Activated T-helper 2 cell treated with anti-CD3 and anti-CD28 coated beads, Interferon-gamma antibody, Interleukin-2, Interleukin-4, amounts not matched to agents 10 μg/mL and 5 μg/mL and 100 μg/mL, durations not matched to agents 14 hours and 24 hours and 36 hours (primary cell): ENCODE measurements at regions of chr2 and their contacts with region 1.

Region 1: DNA sequence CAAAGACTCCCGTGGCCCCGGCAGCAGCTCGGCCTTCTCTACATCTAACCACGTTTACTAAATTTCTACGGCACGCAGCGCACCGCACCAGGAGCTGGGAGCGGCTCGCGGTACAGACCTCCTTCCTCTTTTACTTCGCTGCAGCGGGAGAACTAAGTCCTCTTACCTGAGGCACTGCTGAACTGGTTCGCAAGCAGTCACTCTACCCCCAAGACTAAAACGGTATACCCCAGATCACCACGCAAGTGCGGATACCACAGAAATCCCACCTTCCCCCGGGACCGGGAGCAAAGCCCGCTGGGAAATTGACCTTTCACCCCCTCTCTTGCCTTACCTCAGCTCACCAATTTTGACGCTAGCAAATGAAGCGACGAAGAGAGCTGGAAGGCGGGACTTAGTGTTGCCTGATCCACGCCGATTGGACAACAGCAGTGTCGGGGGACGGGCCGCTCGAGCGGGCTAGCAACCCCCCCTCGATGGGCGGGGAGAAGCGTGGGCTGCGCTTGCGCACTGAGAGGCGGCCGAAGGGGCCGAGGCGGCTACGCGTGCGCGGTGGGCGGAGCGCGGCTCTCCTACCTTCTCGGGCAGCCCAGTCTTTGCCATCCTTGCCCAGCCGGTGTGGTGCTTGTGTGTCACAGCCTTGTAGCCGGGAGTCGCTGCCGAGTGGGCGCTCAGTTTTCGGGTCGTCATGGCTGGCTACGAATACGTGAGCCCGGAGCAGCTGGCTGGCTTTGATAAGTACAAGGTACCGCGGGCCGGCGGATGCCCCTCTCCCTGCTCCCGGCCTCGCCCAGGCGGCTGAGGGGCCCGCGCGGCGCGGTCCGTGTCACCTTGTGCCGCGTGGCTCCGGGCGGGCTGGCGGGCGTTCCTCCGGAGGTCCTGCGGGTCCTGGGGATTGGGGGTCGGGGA is at the start of gene SELENOI:
- DNase-seq: peak; percentile 99
- H3K4me3 Mint-ChIP-seq: peak within 1 kb of the TSS; percentile 99
- H3K27ac Mint-ChIP-seq: peak within 1 kb of the TSS; percentile 99
- H3K4me1 Mint-ChIP-seq: peaks cover 25% of the 10 kb centered on the region
- H3K27me3 Mint-ChIP-seq: no peaks in the 10 kb centered on the region
- total RNA-seq, gene SELENOI: 45.5 and 51.4 TPM in 2 replicates

Region 2: DNA sequence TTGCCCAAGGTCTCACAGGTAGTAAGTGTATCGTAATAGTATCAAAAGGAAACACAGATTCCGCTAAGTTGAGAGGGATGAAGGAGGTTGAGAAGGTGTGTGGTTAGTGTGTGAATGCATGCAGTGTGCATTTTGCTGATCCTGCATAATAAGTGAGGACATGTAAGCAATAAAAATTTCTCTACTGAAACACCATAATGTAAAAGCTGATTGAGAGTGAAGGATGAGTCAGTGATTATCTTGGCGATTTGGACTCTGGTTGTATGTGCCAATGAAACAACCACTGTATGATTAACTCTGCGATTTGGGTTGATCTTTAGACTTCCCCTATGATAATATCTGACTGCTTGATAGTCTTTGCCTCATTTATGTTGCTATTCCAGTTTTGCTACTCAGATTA is 17.5 kb after region 1 on chr2:
- intact Hi-C with region 1: loop called (anchors 2 kb)
- DNase-seq: no peak
- H3K4me3 Mint-ChIP-seq: no peak overlapping the region
- H3K27ac Mint-ChIP-seq: peak overlapping the region; percentile 21
- H3K4me1 Mint-ChIP-seq: peaks cover 20% of the 10 kb centered on the region
- H3K27me3 Mint-ChIP-seq: no peaks in the 10 kb centered on the region

Region 3: DNA sequence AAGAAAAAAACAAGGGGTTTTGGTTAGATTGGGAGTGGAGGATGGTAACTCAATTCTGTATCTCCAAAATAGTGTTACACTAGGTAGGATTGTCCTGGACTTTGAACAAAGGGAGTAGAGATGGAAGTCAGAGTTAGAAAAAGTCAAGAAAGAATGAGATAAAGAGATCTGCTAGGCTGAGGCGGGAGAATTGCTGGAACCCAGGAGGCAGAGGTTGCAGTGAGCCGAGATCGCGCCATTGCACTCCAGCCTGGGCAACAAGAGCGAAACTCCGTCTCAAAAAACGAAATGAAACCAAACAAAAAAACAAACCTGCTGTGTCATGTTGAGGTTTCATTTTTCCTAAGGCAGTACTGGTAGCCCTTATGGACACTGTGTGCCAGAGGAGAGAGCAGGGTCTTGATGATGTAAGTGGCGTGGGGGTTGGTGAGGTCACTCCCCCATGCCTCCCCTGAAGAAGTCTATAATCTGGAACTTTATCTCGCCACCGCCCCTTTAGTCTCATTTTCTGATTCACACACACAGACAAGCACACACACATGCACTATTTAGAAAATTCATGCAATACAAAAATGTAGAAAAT is 66.4 kb after region 1 on chr2:
- intact Hi-C with region 1: loop called (anchors 5 kb)
- DNase-seq: peak; percentile 11
- H3K4me3 Mint-ChIP-seq: peak overlapping the region; percentile 63
- H3K27ac Mint-ChIP-seq: peak overlapping the region; percentile 40
- H3K4me1 Mint-ChIP-seq: peaks cover 9% of the 10 kb centered on the region
- H3K27me3 Mint-ChIP-seq: peaks cover 15% of the 10 kb centered on the region

Region 4: GRCh38 chr2:26785431-26786206 is 439.8 kb after region 1 on chr2 and contains the start of gene CENPA:
- intact Hi-C with region 1: loop called (anchors 5 kb)
- DNase-seq: peak; percentile 94
- H3K4me3 Mint-ChIP-seq: peak within 1 kb of the TSS; percentile 93
- H3K27ac Mint-ChIP-seq: peak within 1 kb of the TSS; percentile 81
- H3K4me1 Mint-ChIP-seq: peaks cover 32% of the 10 kb centered on the region
- H3K27me3 Mint-ChIP-seq: no peaks in the 10 kb centered on the region
- total RNA-seq, gene CENPA: 24.3 and 27.3 TPM in 2 replicates